SK-N-SH (cell line): ENCODE measurements at regions of chr10 and their contacts with region 1.

Region 1: DNA sequence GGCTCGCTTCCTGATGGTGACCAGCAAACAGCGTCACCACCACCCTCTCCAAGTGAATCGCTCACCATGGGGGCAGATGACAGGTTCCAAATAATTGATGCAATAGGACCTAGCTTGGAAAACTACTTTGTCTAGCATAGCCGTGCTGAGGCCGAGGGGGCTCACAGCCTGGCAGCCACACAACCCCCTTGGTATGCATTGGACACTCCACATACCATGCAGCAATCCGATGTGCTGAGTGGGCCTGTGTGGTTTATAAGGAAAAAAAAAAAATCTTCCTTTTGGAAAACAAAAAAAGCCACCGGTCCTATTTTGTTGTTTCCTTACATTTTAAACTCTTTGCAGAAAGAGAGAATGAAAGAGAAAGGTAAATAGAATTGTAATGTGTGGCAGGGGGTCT is 15.1 kb downstream of the GATA3 start:
- DNase-seq: no peak
- H3K4me3 ChIP-seq: peak overlapping the region in 1 of 2 experiments; percentile 33; a peak in 1 of 4 replicates
- H3K27ac ChIP-seq: peak overlapping the region; percentile 86 to 96
- H3K4me1 ChIP-seq: peaks cover 49 to 59% of the 10 kb centered on the region in 2 experiments
- H3K27me3 ChIP-seq: no peaks in the 10 kb centered on the region
- CTCF ChIP-seq: no peak
- EP300 ChIP-seq: peak in 1 of 2 experiments; percentile 80; a peak in 1 of 4 replicates
- RAD21 ChIP-seq: no peak

Region 2: DNA sequence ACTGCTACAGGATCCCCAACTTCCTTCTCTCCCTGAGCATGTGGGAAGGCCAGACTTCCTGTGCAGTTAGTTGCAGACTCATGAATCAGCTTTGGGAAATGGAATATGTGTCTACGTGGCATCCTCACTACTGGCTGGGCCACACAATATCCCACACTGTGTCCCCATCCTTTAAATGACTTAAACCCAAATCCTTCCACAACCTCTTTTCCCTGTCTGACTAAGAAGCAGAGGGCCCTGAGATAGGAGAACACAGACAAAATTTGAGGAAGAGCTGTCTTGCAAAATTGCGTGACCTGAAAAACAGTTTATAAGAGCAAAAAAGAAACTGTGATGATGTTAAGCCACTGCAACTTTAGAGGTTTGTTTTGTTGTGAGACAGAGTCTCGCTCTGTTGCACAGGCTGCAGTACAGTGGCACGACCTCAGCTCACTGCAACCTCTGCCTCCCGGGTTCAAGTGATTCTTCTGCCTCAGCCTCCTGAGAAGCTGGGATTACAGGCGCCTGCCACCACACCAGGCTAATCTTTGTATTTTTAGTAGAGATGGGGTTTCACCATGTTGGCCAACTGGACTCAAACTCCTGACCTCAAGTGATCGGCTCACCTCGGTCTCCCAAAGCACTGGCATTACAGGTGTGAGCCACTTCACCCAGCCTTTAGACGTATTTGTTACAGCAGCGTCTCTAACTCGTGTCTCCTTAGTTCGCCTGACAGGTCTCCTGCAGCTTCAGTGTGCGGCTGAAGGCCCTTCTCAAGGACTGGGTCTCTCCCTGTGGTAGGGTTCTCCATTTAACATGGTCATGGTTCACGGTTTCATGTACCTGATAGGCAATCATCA is 611.9 kb before region 1 on chr10:
- CTCF ChIA-PET with region 1: no interaction called
- POLR2A ChIA-PET with region 1: no interaction called
- DNase-seq: no peak
- H3K4me3 ChIP-seq: no peak overlapping the region
- H3K27ac ChIP-seq: no peak overlapping the region
- H3K4me1 ChIP-seq: no peaks in the 10 kb centered on the region; a peak in 1 of 4 replicates
- H3K27me3 ChIP-seq: no peaks in the 10 kb centered on the region
- CTCF ChIP-seq: no peak
- EP300 ChIP-seq: no peak
- RAD21 ChIP-seq: no peak

Region 3: GRCh38 chr10:8116926-8117493 is 47.4 kb after region 1 on chr10:
- CTCF ChIA-PET with region 1: interaction called, 4 read pairs
- POLR2A ChIA-PET with region 1: interaction called, 10 read pairs
- DNase-seq: peak; percentile 81
- H3K4me3 ChIP-seq: no peak overlapping the region
- H3K27ac ChIP-seq: peak overlapping the region; percentile 18 to 96; a peak in 3 of 4 replicates
- H3K4me1 ChIP-seq: peaks cover 0 to 21% of the 10 kb centered on the region in 2 experiments; a peak in 1 of 4 replicates
- H3K27me3 ChIP-seq: no peaks in the 10 kb centered on the region
- CTCF ChIP-seq: no peak
- EP300 ChIP-seq: peak; percentile 15 to 100; a peak in 3 of 4 replicates
- RAD21 ChIP-seq: peak; percentile 54

Region 4: DNA sequence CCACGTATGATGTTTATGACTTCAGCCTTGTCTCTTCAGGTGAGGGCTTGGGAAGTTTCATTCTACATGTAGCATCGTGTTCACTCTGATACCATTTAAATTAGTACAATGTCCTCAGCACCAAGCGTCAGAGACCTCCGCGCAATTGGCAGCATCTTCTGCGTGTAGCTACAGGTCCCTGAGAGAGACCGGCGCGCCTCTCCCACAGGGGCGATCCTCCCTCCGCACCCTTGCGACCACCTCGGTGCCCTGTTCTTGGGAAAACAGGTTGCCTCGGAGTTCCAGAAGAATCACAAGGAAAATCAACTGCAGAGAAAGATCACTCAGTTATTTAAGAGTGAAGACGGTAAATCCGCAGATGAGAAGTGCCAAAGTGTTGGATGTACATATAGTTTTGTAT is 191.0 kb after region 1 on chr10:
- CTCF ChIA-PET with region 1: no interaction called
- POLR2A ChIA-PET with region 1: no interaction called
- DNase-seq: no peak
- H3K4me3 ChIP-seq: no peak overlapping the region
- H3K27ac ChIP-seq: no peak overlapping the region
- H3K4me1 ChIP-seq: peaks cover 0 to 6% of the 10 kb centered on the region in 2 experiments; a peak in 1 of 4 replicates
- H3K27me3 ChIP-seq: no peaks in the 10 kb centered on the region
- CTCF ChIP-seq: no peak
- EP300 ChIP-seq: no peak
- RAD21 ChIP-seq: no peak